Right ventricle myocardium inferior (tissue), 1 donor: ENCODE measurements at regions of chr11 and their contacts with region 1.

Region 1: GRCh38 chr11:5204787-5205186 is 4.3 kb upstream of the OR51V1 start:
- DNase-seq: no peak
- ATAC-seq: no peak

Region 2: GRCh38 chr11:5369793-5370192 is 165.0 kb after region 1 on chr11:
- intact Hi-C with region 1: loop called (anchors 5 kb)
- DNase-seq: no peak
- ATAC-seq: no peak

Region 3: DNA sequence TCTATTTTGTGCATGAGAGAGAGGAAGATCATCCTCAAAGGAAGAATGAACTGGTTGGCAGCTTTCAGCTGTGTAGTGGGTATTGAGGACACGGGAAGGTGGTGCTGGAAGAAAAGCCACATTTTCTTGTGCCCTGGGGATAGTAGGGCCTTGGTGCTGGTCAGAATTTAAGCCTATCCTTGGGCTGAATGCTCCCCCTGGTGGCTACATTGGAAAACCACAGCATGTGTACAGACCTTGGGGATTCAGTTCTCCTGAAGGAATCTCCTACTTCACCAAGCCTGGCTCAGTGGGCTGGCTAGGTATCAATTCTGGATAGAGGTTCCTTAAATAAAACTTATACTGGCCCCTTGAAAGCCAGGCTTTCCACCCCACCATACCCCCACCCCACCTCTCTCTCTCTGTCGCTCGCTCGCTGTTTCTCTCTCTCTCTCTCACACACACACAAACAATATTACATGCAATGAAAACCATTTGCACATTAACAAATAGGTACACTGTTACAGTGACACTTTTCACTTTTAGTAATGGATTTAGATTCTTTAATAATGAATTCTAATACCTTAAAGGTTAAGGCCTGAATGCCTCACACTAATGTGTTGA is 176.1 kb after region 1 on chr11:
- intact Hi-C with region 1: loop called (anchors 5 kb)
- DNase-seq: no peak
- ATAC-seq: peak; percentile 44